Body of pancreas (tissue), 4 donors: ENCODE measurements at regions of chr2 and their contacts with region 1.

Region 1: GRCh38 chr2:113370478-113371091 is 66.9 kb upstream of the ZNG1B start:
- DNase-seq: peak; percentile 73 to 84 (median 74)
- ATAC-seq: peak; percentile 96
- H3K4me3 ChIP-seq: no peak overlapping the region
- H3K27ac ChIP-seq: peak overlapping the region in 3 of 4 donors; percentile 15 to 55 (median 44)
- H3K4me1 ChIP-seq: peaks cover 5% of the 10 kb centered on the region
- H3K27me3 ChIP-seq: no peaks in the 10 kb centered on the region
- CTCF ChIP-seq: peak; percentile 32 to 93 (median 86)
- POLR2A ChIP-seq: no peak

Region 2: GRCh38 chr2:113248997-113249770 is 121.4 kb before region 1 on chr2:
- intact Hi-C with region 1: loop called (anchors 5 kb)
- DNase-seq: peak; percentile 80 to 85 (median 84)
- ATAC-seq: peak; percentile 90
- H3K4me3 ChIP-seq: no peak overlapping the region
- H3K27ac ChIP-seq: no peak overlapping the region
- H3K4me1 ChIP-seq: peaks cover 6% of the 10 kb centered on the region
- H3K27me3 ChIP-seq: no peaks in the 10 kb centered on the region
- CTCF ChIP-seq: peak; percentile 77 to 94 (median 90)
- POLR2A ChIP-seq: no peak

Region 3: GRCh38 chr2:113799375-113799774 is 428.8 kb after region 1 on chr2:
- intact Hi-C with region 1: no loop called
- DNase-seq: no peak
- ATAC-seq: no peak
- H3K4me3 ChIP-seq: no peak overlapping the region
- H3K27ac ChIP-seq: no peak overlapping the region
- H3K4me1 ChIP-seq: no peaks in the 10 kb centered on the region
- H3K27me3 ChIP-seq: no peaks in the 10 kb centered on the region
- CTCF ChIP-seq: no peak
- POLR2A ChIP-seq: no peak

Region 4: DNA sequence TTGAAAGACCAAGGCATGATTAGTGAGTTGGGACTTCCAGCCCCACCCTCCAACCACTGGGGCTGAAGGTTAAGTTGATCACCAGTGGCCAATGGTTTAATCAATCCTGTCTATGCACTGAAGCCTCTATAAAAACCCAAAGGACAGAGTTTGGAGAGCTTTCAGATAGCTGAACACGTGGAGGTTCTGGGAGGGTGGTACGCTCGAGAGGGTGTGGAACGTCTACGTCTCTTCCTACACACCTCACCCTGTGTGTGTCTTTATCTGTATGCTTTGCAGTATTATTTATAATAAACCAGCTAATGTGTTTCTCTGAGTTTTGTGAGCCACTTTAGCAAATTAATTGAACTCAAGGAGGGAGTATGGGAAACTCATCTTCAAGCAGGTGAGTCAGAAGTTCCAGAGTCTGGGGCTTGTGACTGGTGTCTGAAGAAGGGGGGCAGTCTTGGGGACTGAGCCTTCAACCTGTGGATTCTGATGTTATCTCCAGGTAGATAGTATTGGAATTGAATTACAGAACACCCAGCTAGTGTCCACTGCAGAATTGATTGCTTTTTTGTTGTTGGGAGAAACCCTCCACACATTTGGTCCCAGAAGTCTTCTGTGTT is 539.6 kb after region 1 on chr2:
- intact Hi-C with region 1: no loop called
- DNase-seq: no peak
- ATAC-seq: no peak
- H3K4me3 ChIP-seq: no peak overlapping the region
- H3K27ac ChIP-seq: no peak overlapping the region
- H3K4me1 ChIP-seq: peaks cover 13% of the 10 kb centered on the region
- H3K27me3 ChIP-seq: no peaks in the 10 kb centered on the region
- CTCF ChIP-seq: no peak
- POLR2A ChIP-seq: no peak